ENCODE measurements at regions of chr22 and their contacts with region 1.

Region 1: GRCh38 chr22:41857155-41857859 is 24.4 kb downstream of the SREBF2 start:
- DNase-seq: peak in 1 of 2 donors; percentile 45
- ATAC-seq: peak; percentile 58 to 82 (median 62)
- H3K4me3 ChIP-seq: no peak overlapping the region
- H3K27ac ChIP-seq: peak overlapping the region in 3 of 10 donors; percentile 28 to 70 (median 36)
- H3K4me1 ChIP-seq: peaks cover 0 to 50% (median 19%) of the 10 kb centered on the region in 9 donors
- H3K27me3 ChIP-seq: no peaks in the 10 kb centered on the region
- CTCF ChIP-seq: peak; percentile 20 to 72 (median 56)

Region 2: DNA sequence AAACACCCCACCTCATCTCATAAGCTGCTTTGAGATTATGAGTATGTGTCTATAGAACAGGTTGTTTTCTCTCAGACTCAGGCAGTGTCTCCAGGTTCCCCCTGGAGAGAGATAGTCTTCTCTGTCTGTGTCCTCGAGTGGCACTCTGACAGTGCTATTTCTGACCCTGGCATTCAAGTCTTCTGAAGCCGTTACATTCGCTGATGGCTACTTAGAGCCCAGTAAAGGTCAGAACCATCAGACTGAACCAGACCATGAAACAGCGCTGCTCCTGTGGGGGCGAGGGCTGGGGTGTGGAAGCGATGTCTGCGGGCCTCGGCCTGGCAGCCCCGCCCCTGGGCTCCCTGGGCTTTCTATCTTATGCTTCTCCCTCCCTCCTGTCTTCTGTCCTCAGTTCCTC is 34.1 kb after region 1 on chr22:
- intact Hi-C with region 1: loop called in 1 of 10 experiments (anchors 5 kb)
- DNase-seq: no peak
- ATAC-seq: peak; percentile 44 to 90 (median 72)
- H3K4me3 ChIP-seq: no peak overlapping the region
- H3K27ac ChIP-seq: peak overlapping the region in 9 of 10 donors; percentile 44 to 83 (median 70)
- H3K4me1 ChIP-seq: peaks cover 0 to 45% (median 12%) of the 10 kb centered on the region in 9 donors
- H3K27me3 ChIP-seq: no peaks in the 10 kb centered on the region
- CTCF ChIP-seq: no peak

Measured in heart right ventricle (tissue), 16 donors.